ENCODE measurements at regions of chr12 and their contacts with region 1.

Region 1: DNA sequence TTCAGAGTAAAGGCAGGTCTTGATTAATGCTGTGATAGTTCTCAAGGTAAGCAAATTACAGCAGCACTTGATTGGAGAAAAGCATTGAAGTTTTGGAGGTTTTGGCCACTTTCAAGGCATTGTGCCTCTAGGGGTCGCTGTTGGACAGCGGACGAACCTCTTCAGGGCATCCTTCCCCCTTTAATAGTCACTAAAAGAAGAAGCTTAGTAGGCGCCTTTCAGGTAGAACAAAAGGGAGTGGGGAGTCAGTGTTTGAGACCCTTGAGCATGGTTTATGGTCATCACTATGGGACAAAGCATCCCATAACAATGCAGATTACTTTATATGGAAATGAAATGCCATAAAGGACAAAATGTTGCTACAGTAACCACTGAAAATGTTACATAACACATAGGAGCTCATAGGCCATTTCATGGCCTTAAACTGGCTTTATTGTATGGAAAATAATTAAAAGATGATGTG is 199.5 kb upstream of the DCN start:
- DNase-seq: peak; percentile 17
- H3K4me3 ChIP-seq: peak overlapping the region; percentile 61
- CTCF ChIP-seq: peak; percentile 82

Region 2: GRCh38 chr12:91400271-91400670 is 18.2 kb after region 1 on chr12:
- CTCF ChIA-PET with region 1: interaction called, 33 read pairs
- POLR2A ChIA-PET with region 1: no interaction called
- DNase-seq: no peak
- H3K4me3 ChIP-seq: no peak overlapping the region
- CTCF ChIP-seq: no peak

Region 3: GRCh38 chr12:92136965-92137721 is 755.0 kb after region 1 on chr12:
- CTCF ChIA-PET with region 1: interaction called, 13 read pairs
- POLR2A ChIA-PET with region 1: no interaction called
- DNase-seq: peak; percentile 65
- H3K4me3 ChIP-seq: no peak overlapping the region
- CTCF ChIP-seq: no peak

Region 4: DNA sequence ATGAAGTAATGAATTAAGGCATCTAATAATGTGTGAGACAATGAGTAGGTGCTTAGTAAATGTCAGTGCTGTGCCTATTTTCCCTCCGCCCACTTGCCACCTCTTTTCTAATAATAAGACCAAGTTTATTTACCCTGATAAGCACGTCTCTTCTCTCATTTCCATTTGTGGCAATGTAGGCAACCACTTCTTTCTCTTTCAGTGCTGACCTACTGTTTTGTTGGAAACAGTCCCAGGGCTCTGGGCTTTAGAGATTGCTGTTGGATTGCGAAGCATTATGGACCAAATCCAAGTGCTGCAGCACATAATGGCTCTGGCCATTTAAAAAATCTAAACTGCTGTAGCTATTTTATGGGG is 1179.4 kb after region 1 on chr12:
- CTCF ChIA-PET with region 1: interaction called, 18 read pairs
- POLR2A ChIA-PET with region 1: no interaction called
- DNase-seq: peak; percentile 60
- H3K4me3 ChIP-seq: no peak overlapping the region
- CTCF ChIP-seq: no peak

Region 5: GRCh38 chr12:92649511-92650227 is 1267.6 kb after region 1 on chr12:
- CTCF ChIA-PET with region 1: interaction called, 72 read pairs
- POLR2A ChIA-PET with region 1: no interaction called
- DNase-seq: peak; percentile 60
- H3K4me3 ChIP-seq: no peak overlapping the region
- CTCF ChIP-seq: peak; percentile 74

Measured in AG04449 (cell line).